Ovary (tissue), 10 donors: ENCODE measurements at regions of chr19 and their contacts with region 1.

Region 1: GRCh38 chr19:48152551-48152950 is 17.6 kb downstream of the LIG1 start:
- DNase-seq: peak; percentile 27 to 72 (median 63)
- H3K4me3 ChIP-seq: no peak overlapping the region
- H3K27ac ChIP-seq: no peak overlapping the region
- H3K4me1 ChIP-seq: no peaks in the 10 kb centered on the region
- H3K27me3 ChIP-seq: no peaks in the 10 kb centered on the region
- CTCF ChIP-seq: peak; percentile 69 to 80 (median 75)
- EP300 ChIP-seq: no peak
- POLR2A ChIP-seq: no peak

Region 2: DNA sequence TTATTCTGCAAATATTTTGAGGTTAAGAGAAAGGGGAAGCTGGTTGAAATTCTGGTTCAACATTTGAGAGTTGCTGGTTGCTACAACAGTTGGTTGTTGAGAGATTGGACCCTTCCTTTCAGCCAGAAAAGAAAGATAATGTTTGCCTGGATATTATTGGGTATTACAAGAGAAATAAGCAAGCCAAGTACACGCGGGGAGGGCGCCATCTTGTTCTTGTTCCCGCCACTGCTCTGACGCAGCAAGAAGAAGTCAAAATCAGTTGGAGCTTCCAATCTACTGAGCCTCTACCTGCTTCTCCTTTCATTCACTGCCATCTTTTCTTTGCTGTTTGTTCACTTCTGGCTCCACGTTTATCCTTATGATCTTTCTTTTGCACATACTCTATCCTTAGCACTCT is 179.0 kb before region 1 on chr19:
- intact Hi-C with region 1: loop called in 2 of 4 experiments (anchors 5 to 10 kb)
- DNase-seq: no peak
- H3K4me3 ChIP-seq: no peak overlapping the region
- H3K27ac ChIP-seq: no peak overlapping the region
- H3K4me1 ChIP-seq: no peaks in the 10 kb centered on the region
- H3K27me3 ChIP-seq: no peaks in the 10 kb centered on the region
- CTCF ChIP-seq: no peak
- EP300 ChIP-seq: no peak
- POLR2A ChIP-seq: no peak

Region 3: DNA sequence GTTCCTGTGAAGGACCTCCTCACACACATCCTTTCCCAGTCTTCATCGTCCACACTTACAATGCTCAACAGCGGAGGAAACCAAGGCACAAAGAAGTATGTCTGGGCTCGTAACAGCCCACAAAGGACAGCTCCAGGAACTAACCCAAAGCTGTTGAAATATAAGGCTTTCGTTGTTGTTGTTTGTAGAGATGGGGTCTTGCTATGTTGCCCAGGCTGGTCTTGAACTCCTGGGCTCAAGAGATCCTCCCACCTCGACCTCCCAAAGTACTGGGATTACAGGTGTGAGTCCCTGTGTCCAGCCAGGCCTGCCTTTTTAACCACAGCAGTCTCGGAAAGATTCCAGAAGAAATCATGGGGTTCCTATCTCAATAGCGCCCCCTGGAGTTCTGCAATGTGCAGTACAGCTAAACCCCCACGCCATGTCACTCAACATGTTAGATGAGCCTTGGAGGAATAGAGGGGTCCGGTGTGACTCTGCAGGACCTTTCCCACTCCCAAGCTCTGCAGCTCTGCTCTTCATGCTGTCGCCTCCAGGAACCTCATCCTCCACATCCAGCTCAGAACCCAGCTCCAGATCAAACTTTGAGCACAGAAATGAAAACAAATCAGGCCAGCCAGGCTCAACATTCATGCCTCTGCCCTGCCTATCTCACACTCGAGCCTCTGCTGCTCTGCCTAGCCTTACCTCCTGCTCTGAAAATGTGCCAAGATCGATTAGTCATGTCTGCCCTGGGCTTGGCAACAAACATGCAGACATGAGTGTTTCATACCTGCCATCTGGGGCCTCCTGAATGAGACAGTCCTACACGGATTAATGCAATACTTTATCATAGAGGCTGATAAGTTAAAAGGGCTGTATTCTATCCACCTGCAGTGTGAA is 49.4 kb before region 1 on chr19:
- intact Hi-C with region 1: loop called in 1 of 4 experiments (anchors 10 kb)
- DNase-seq: no peak
- H3K4me3 ChIP-seq: no peak overlapping the region
- H3K27ac ChIP-seq: no peak overlapping the region
- H3K4me1 ChIP-seq: no peaks in the 10 kb centered on the region
- H3K27me3 ChIP-seq: no peaks in the 10 kb centered on the region
- CTCF ChIP-seq: no peak
- EP300 ChIP-seq: no peak
- POLR2A ChIP-seq: no peak

Region 4: DNA sequence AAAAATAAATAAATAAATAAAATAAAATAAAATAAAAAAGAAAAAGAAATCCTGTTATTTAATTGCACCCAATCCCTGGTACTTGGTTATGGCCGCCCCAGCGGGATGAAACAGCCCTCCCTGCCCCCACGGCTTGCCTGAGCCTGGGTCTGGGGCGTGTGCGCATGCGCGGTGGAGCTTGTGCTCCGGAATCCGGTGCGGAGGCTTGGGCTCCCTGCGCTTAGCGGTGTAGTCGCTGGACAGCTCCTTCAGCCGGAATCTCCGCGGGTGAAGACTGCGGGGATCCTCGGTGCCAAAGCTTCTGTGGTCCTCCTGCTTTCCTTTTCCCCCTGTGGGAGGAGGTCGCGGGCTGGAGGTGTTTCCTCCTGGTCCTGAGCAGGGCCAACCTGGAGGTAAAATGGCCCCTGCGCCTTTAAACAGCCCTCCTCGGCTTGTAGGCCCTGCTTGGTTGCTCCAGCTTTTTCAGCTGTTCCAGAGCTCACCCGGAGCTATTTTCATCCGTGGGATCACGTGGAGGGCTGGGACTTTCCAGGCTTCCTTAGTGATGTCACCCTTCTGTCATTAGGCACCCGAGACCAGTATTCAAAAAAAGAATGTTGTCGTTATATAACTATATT is 42.1 kb before region 1 on chr19 and contains the start of gene PLA2G4C:
- intact Hi-C with region 1: loop called in 3 of 4 experiments (anchors 5 to 10 kb)
- DNase-seq: peak; percentile 86 to 93 (median 87)
- H3K4me3 ChIP-seq: peak within 1 kb of the TSS; percentile 49
- H3K27ac ChIP-seq: peak within 1 kb of the TSS; percentile 60 to 62
- H3K4me1 ChIP-seq: no peaks in the 10 kb centered on the region
- H3K27me3 ChIP-seq: no peaks in the 10 kb centered on the region
- CTCF ChIP-seq: no peak
- EP300 ChIP-seq: no peak
- POLR2A ChIP-seq: peak; percentile 51
- total RNA-seq, gene PLA2G4C: 2.9 to 6.9 (median 4.9) TPM